ENCODE measurements at regions of chr1 and their contacts with region 1.

Region 1: DNA sequence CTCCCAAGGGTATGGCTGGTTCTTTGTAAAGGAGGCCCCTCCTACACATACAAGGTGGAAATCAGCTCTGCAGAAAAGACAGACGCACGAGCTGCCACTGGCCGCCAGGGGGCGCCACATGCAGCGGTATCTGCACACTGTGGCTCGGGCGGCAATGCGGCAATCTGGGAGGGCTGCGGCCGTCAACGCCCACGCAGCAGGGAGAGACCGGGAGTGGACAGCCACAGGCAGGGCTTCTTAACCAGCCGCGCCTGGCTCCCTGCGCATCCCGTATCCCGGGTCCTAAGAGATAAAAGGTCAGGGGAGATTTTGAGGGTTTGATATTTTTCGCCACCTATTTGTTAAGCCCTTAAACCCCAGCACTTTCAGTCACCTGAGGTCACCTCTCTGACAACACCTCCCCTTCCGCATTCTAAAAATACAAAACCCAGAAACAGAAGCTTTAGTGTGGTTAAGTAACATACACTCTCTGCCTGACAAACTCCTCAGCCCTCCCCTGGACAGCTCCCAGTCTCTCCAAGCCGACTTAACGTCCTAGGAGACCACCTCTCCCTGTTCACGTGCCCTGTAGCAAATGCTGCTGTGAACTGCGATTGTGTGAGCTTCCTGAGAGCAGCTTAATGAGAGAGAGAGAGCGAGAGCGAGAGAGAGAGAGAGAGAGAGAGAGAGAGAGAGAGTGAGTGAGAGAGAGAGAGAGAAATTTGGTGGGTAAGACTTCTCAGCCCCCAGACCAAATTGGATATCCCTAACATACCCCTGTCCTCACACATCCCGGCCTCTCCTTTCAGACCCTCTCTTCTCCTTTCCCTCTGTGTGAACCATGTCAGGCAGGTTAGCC is 13.5 kb upstream of the KCNA2 start:
- DNase-seq: no peak
- H3K4me3 ChIP-seq: no peak overlapping the region
- H3K27me3 ChIP-seq: peaks cover 9% of the 10 kb centered on the region
- CTCF ChIP-seq: peak; percentile 89

Region 2: GRCh38 chr1:110482662-110483307 is 136.8 kb before region 1 on chr1:
- CTCF ChIA-PET with region 1: no interaction called
- POLR2A ChIA-PET with region 1: no interaction called
- DNase-seq: no peak
- H3K4me3 ChIP-seq: no peak overlapping the region
- H3K27me3 ChIP-seq: peaks cover 13% of the 10 kb centered on the region
- CTCF ChIP-seq: no peak

Region 3: GRCh38 chr1:110605901-110606656 is 13.6 kb before region 1 on chr1 and contains the start of gene KCNA2:
- CTCF ChIA-PET with region 1: interaction called, 15 read pairs
- POLR2A ChIA-PET with region 1: no interaction called
- DNase-seq: no peak
- H3K4me3 ChIP-seq: peak within 1 kb of the TSS; percentile 17
- H3K27me3 ChIP-seq: peaks cover 50% of the 10 kb centered on the region
- CTCF ChIP-seq: no peak
- polyA plus RNA-seq, gene KCNA2: not detected in 2 replicates

Region 4: DNA sequence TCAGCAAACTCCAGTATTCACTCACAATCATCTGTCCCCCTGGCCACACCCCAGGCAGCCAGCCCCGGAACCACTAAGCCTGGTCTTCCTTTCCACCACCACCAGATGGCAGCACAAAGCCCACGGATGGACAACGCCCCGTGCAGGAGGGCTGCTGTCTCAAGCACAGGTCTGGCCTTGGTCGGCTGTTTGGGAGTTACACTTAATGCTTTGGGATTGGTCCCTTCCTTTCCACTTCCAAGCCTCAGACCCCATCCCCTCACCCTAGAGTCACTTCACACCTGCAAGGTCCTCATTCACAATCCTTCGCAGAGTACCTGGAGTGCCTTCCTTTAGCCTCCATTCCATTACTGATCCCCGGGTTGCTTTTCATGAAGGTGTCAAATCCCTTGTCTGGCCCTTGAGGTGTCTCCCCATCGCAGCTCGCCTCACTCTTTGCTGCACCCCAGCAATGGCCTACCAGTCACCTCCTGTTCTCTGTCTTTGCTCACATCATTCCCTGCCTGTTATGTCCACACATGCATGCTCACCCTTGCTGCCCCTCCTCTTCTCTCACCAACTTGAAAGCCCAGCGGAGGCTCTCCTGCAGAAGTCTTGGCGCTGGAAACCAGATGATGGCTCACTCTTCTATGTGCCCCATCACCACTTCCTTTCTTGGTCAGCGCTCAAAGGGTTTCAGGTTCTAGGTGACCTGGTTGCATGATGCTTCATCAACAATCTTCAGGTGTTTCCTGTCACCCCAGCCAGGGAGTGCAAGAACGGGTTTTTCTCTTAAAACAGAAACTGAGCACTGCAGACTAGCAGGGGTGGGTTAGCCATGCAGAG is 11.4 kb after region 1 on chr1:
- CTCF ChIA-PET with region 1: interaction called, 13 read pairs
- POLR2A ChIA-PET with region 1: no interaction called
- DNase-seq: no peak
- H3K4me3 ChIP-seq: no peak overlapping the region
- H3K27me3 ChIP-seq: no peaks in the 10 kb centered on the region
- CTCF ChIP-seq: peak; percentile 91

Region 5: DNA sequence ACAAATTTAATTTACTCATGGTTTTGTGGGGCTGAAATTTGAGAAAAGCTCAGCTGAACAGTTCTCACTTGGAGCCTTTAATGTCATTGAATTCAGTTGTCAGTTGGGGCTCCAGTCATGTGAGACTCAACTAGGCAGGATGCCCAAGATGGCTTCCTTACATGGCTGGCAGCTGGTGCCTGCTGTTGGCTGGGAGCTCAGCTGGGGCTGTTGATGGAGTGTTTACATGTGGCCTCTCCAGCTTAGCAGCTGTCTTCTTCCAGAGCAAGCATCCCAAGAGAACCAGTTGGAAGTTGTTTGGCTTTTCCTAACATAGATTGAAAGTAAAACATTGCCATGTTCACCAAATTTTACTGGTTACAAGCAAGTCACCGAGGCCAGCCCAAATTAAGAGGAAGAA is 136.9 kb after region 1 on chr1:
- CTCF ChIA-PET with region 1: interaction called, 15 read pairs
- POLR2A ChIA-PET with region 1: no interaction called
- DNase-seq: no peak
- H3K4me3 ChIP-seq: no peak overlapping the region
- H3K27me3 ChIP-seq: peaks cover 4% of the 10 kb centered on the region; the same call in 1 of the 2 replicates
- CTCF ChIP-seq: no peak

Measured in BJ (cell line).